ENCODE measurements at regions of chr11 and their contacts with region 1.

Region 1: GRCh38 chr11:45110562-45110961 is 35.9 kb upstream of the PRDM11 start:
- DNase-seq: peak in 2 of 5 donors; percentile 23 to 55
- H3K4me3 ChIP-seq: no peak overlapping the region
- H3K27ac ChIP-seq: no peak overlapping the region
- H3K4me1 ChIP-seq: no peaks in the 10 kb centered on the region
- H3K27me3 ChIP-seq: no peaks in the 10 kb centered on the region
- CTCF ChIP-seq: peak; percentile 56 to 82 (median 82)
- EP300 ChIP-seq: no peak
- POLR2A ChIP-seq: no peak

Region 2: DNA sequence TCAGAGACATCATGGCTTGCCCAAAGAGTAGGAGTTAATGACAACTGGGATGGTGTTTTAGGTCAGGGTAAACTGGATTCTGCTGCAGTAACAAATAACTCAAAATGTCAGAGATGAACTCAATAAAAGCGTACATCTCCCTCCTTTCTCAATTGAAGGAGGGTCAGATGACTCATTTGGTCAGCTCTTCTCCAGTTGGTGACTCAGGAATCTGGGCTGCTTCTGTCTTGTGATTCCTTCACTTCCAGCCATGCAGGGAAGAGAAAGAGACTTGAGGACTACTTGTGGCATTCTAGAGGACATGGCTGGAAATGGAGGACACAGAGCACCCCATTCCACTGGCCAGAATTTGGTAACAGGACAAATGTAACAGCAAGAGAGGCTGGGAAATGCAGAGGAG is 178.8 kb after region 1 on chr11:
- intact Hi-C with region 1: loop called in 3 of 4 experiments (anchors 2 to 5 kb)
- DNase-seq: no peak
- H3K4me3 ChIP-seq: no peak overlapping the region
- H3K27ac ChIP-seq: no peak overlapping the region
- H3K4me1 ChIP-seq: peaks cover 2% of the 10 kb centered on the region
- H3K27me3 ChIP-seq: no peaks in the 10 kb centered on the region
- CTCF ChIP-seq: no peak
- EP300 ChIP-seq: no peak
- POLR2A ChIP-seq: no peak

Region 3: DNA sequence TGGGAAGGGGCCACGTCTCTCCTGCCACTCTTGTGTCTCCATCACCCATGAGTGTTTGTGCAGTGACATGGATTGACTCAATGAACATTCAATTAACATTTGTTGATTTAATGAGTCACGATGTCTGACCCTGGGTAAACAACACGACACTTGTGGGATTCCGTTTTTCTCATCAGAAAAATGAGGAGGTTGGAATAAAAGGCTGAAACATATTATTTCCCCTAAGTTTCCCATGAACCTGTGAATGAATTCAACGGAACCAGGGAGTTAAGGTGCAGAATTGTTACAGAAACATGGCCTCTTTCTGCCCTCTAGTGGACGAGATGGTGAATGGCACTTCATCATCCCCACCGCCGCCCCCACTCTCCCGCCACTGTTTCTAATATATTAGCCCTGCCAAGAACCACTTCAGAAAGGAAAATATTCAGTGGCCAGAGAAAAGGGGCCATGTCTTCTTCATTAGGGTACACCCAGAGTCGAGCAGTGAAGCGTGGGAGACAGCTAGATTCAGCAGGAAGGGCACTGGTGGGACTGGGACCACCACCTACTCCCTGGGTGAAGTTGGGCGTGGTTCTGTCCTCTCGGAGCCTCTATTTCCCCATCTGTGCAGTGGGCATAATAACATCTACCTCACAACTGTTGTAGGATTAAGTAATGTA is 221.8 kb after region 1 on chr11:
- intact Hi-C with region 1: loop called in 2 of 4 experiments (anchors 5 kb)
- DNase-seq: peak; percentile 30 to 67 (median 56)
- H3K4me3 ChIP-seq: peak overlapping the region; percentile 2
- H3K27ac ChIP-seq: peak overlapping the region in 1 of 2 donors; percentile 31
- H3K4me1 ChIP-seq: peaks cover 4% of the 10 kb centered on the region
- H3K27me3 ChIP-seq: no peaks in the 10 kb centered on the region
- CTCF ChIP-seq: peak; percentile 12 to 72 (median 49)
- EP300 ChIP-seq: no peak
- POLR2A ChIP-seq: no peak